Aorta (tissue), 5 donors: ENCODE measurements at regions of chr15 and their contacts with region 1.

Region 1: DNA sequence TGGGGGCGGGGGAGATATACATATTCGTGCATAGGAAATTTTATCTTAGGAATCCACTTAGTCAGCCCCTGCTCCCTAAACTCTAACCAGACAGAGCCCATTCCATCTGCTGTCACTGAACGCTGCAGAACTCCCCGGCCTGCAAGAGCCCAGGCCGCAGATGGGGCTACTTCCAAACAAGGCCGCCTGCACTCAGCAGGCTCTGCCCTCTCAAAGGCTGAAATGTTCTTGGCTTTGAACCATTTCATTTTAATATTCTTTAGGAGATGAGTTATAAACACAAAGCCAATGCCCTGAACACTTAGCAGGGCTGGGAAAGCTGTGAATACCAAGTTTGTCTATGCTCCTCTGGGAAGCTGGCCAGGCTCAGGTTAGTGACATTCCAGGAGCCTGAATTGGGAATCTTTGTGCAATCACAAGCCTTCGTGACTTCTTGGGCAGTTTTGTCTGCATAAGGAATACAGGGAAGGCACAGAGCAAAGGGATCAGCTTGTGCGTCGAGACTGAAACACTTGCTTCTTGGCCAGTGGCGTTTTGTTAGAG is 65.0 kb downstream of the SYNM start:
- DNase-seq: no peak
- ATAC-seq: peak; percentile 75
- H3K4me3 ChIP-seq: no peak overlapping the region
- H3K27ac ChIP-seq: peak overlapping the region; percentile 78 to 99
- H3K4me1 ChIP-seq: peaks cover 0 to 6% of the 10 kb centered on the region in 2 donors
- H3K27me3 ChIP-seq: no peaks in the 10 kb centered on the region

Region 2: GRCh38 chr15:99059010-99059981 is 110.5 kb before region 1 on chr15:
- intact Hi-C with region 1: no loop called
- DNase-seq: peak; percentile 89 to 95
- ATAC-seq: peak; percentile 94
- H3K4me3 ChIP-seq: peak overlapping the region; percentile 63 to 77
- H3K27ac ChIP-seq: peak overlapping the region; percentile 52 to 58
- H3K4me1 ChIP-seq: no peaks in the 10 kb centered on the region
- H3K27me3 ChIP-seq: no peaks in the 10 kb centered on the region

Region 3: GRCh38 chr15:99213187-99213811 is 43.5 kb after region 1 on chr15:
- intact Hi-C with region 1: loop called in 1 of 2 experiments (anchors 5 kb)
- DNase-seq: peak; percentile 86 to 93
- ATAC-seq: peak; percentile 90
- H3K4me3 ChIP-seq: no peak overlapping the region
- H3K27ac ChIP-seq: no peak overlapping the region
- H3K4me1 ChIP-seq: no peaks in the 10 kb centered on the region
- H3K27me3 ChIP-seq: no peaks in the 10 kb centered on the region

Region 4: DNA sequence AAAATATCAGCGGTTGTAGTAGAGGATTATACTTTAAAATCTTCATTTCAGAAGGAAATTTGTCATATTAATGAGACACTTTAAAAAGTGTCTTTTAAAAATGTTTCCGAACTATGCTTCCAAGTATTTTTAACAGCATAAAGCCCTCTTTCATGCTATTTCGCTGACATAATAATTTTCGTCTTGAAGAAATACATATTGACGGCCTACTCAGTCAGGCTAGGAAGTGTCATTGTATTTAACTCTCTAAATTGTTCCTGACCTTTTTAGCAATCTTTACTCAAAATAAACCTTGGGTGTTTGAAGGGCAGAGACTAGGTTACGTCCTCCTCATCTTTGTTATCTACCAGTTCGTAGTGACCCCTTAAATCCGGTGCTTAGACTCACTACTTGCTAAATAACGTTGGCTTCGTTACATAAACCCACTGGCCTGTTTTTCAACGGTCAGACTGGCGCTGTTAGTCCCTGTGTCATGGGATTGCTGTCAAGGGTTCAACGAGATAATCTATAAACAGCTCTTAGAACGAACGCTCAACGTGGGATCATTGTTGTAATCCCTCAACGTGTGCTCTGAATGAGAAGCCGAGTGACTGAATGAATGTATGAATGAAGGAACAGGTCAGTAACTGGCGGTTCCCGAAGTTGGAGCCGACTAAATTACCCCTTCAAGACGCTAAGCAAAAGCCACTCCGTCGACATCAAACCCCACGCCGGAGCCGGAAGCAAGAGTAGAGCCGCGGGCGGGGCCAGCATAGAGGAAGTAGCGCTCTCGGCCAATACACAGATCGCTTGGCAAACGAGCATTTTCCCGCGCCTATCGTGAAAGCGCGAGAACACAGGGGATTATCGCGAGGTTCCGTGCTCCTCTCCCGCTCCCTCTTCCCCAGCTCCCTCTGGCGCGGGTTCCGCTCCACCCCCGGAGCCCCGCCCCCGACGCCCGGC is 80.9 kb after region 1 on chr15:
- intact Hi-C with region 1: loop called in 1 of 2 experiments (anchors 5 kb)
- DNase-seq: peak; percentile 99
- ATAC-seq: peak; percentile 96
- H3K4me3 ChIP-seq: peak overlapping the region; percentile 61 to 89
- H3K27ac ChIP-seq: peak overlapping the region; percentile 61 to 98
- H3K4me1 ChIP-seq: peaks cover 0 to 1% of the 10 kb centered on the region in 2 donors
- H3K27me3 ChIP-seq: no peaks in the 10 kb centered on the region

Region 5: GRCh38 chr15:99486371-99487336 is 316.8 kb after region 1 on chr15:
- intact Hi-C with region 1: no loop called
- DNase-seq: peak; percentile 93 to 95
- ATAC-seq: peak; percentile 85
- H3K4me3 ChIP-seq: peak overlapping the region; percentile 1 to 3
- H3K27ac ChIP-seq: peak overlapping the region in 1 of 2 donors; percentile 60
- H3K4me1 ChIP-seq: no peaks in the 10 kb centered on the region
- H3K27me3 ChIP-seq: no peaks in the 10 kb centered on the region

Region 6: GRCh38 chr15:100833417-100834389 is 1663.9 kb after region 1 on chr15:
- intact Hi-C with region 1: no loop called
- DNase-seq: no peak
- ATAC-seq: no peak
- H3K4me3 ChIP-seq: no peak overlapping the region
- H3K27ac ChIP-seq: no peak overlapping the region
- H3K4me1 ChIP-seq: no peaks in the 10 kb centered on the region
- H3K27me3 ChIP-seq: no peaks in the 10 kb centered on the region